ENCODE measurements at regions of chr10 and their contacts with region 1.

Region 1: DNA sequence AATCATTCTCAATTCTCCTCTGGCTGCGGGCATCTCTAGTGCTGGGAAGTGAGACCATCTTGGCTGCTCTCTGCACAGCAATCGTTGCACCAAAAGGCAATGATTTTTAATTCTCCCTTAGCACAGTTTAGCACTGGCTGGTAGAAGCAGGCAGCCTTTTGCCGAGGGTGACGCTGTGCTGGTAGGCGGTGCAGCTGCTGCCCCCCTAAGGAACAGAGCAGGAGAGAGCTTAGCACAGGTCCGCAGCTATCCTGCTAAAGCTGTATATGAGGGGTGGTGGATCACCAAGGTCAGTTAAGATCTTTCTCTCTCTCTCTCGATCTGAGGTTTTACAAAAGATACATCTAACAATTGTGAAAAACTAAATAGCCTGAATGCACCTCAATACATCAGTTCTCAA is 390.1 kb downstream of the GATA3 start:
- DNase-seq: peak; percentile 25 to 51
- H3K4me3 ChIP-seq: no peak overlapping the region
- H3K27ac ChIP-seq: no peak overlapping the region
- H3K4me1 ChIP-seq: peaks cover 0 to 5% (median 0%) of the 10 kb centered on the region in 4 experiments; a peak in 2 of 7 replicates
- H3K27me3 ChIP-seq: no peaks in the 10 kb centered on the region
- CTCF ChIP-seq: peak; percentile 54 to 65 (median 59)
- EP300 ChIP-seq: no peak
- POLR2A ChIP-seq: no peak
- RAD21 ChIP-seq: peak; percentile 67 to 72

Region 2: GRCh38 chr10:8428654-8429053 is 16.0 kb before region 1 on chr10:
- CTCF ChIA-PET with region 1: interaction called, 55 read pairs
- POLR2A ChIA-PET with region 1: interaction called, 3 read pairs
- DNase-seq: peak; percentile 15 to 48
- H3K4me3 ChIP-seq: no peak overlapping the region
- H3K27ac ChIP-seq: no peak overlapping the region
- H3K4me1 ChIP-seq: peaks cover 0 to 4% (median 3%) of the 10 kb centered on the region in 4 experiments; a peak in 3 of 7 replicates
- H3K27me3 ChIP-seq: no peaks in the 10 kb centered on the region
- CTCF ChIP-seq: no peak
- EP300 ChIP-seq: no peak
- POLR2A ChIP-seq: no peak
- RAD21 ChIP-seq: 0 out of 4 replicates have a peak, but pooled peaks have one; percentile 12 to 16

Region 3: GRCh38 chr10:8456386-8456785 is 11.8 kb after region 1 on chr10:
- CTCF ChIA-PET with region 1: interaction called, 15 read pairs
- POLR2A ChIA-PET with region 1: no interaction called
- DNase-seq: no peak
- H3K4me3 ChIP-seq: no peak overlapping the region
- H3K27ac ChIP-seq: no peak overlapping the region
- H3K4me1 ChIP-seq: no peaks in the 10 kb centered on the region
- H3K27me3 ChIP-seq: no peaks in the 10 kb centered on the region
- CTCF ChIP-seq: no peak
- EP300 ChIP-seq: no peak
- POLR2A ChIP-seq: no peak
- RAD21 ChIP-seq: no peak